ENCODE measurements at regions of chr16 and their contacts with region 1.

Region 1: DNA sequence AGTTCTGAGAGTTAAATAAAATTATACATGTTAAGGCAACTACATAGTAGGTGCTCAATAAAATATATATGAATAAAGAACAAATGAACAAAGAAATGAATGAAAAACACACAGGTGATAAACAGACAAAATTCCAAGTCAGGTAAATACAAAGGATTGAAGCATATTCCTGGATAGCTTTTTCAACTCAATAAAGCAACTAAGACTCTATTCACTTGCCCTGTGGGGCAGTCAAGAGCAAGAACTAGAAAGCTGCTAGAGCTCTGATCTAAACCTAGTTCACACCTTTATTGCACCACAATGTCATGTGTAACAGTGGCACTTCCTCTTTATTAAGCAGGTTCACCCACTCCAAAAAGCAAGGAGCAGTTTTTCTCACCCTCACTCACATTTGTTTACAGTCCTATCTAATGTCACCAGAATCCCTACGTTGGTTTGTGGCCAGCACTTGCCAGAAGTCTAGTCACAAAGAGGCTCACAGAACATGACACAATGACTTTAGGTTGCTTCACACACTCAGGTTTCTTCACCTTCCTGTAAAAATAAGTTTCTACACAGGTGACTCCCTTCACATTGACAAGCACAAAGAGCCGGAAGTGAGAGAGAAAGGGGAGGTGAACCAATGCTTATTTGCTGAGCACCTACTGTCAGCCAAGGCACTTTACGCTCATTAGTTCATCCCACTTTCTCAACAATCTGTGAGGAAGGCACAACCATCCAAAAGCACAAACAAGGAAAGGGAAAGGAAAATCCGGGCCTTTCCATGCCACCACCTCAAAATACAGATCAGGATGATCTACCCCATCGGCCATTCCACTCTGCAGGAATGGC is 70.8 kb downstream of the XPO6 start:
- DNase-seq: peak; percentile 90
- ATAC-seq: peak; percentile 77
- H3K4me3 ChIP-seq: peak overlapping the region in 4 of 5 experiments; percentile 23 to 53 (median 38)
- H3K4me3 Mint-ChIP-seq: peak overlapping the region; percentile 75
- H3K27ac ChIP-seq: peak overlapping the region; percentile 86 to 96
- H3K27ac Mint-ChIP-seq: peak overlapping the region; percentile 97
- H3K4me1 ChIP-seq: peaks cover 62 to 71% of the 10 kb centered on the region in 2 donors
- H3K4me1 Mint-ChIP-seq: peaks cover 63% of the 10 kb centered on the region
- H3K27me3 ChIP-seq: no peaks in the 10 kb centered on the region
- H3K27me3 Mint-ChIP-seq: no peaks in the 10 kb centered on the region
- CTCF ChIP-seq: peak; percentile 68

Region 2: DNA sequence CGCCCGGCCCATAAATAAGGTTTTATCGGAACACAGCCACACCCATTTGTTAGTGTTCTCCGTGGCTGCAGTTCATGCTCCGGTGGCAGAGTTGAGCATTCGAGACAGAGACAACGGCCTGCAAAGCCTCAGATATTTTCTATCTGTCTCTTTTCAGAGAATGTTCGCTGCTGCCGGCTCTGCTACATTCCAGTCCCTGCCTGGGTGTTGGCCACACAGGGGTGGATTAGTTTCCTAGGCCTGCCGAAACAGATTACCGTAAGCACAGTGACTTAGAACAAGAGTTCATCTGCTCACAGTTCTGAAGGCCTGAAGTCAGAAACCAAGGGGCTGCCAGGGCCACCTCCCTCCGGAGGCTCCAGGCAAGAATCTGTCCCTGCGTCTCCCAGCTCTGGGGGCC is 58.4 kb before region 1 on chr16:
- CTCF ChIA-PET with region 1: no interaction called
- POLR2A ChIA-PET with region 1: no interaction called
- intact Hi-C with region 1: no loop called
- DNase-seq: no peak
- ATAC-seq: no peak
- H3K4me3 ChIP-seq: no peak overlapping the region
- H3K4me3 Mint-ChIP-seq: no peak overlapping the region
- H3K27ac ChIP-seq: no peak overlapping the region
- H3K27ac Mint-ChIP-seq: no peak overlapping the region
- H3K4me1 ChIP-seq: no peaks in the 10 kb centered on the region
- H3K4me1 Mint-ChIP-seq: no peaks in the 10 kb centered on the region
- H3K27me3 ChIP-seq: no peaks in the 10 kb centered on the region
- H3K27me3 Mint-ChIP-seq: no peaks in the 10 kb centered on the region
- CTCF ChIP-seq: no peak

Region 3: GRCh38 chr16:28092711-28093410 is 48.1 kb before region 1 on chr16:
- CTCF ChIA-PET with region 1: no interaction called
- POLR2A ChIA-PET with region 1: interaction called, 10 read pairs
- intact Hi-C with region 1: no loop called
- DNase-seq: no peak
- ATAC-seq: no peak
- H3K4me3 ChIP-seq: no peak overlapping the region
- H3K4me3 Mint-ChIP-seq: no peak overlapping the region
- H3K27ac ChIP-seq: no peak overlapping the region
- H3K27ac Mint-ChIP-seq: no peak overlapping the region
- H3K4me1 ChIP-seq: no peaks in the 10 kb centered on the region
- H3K4me1 Mint-ChIP-seq: peaks cover 2% of the 10 kb centered on the region
- H3K27me3 ChIP-seq: no peaks in the 10 kb centered on the region
- H3K27me3 Mint-ChIP-seq: no peaks in the 10 kb centered on the region
- CTCF ChIP-seq: no peak

Region 4: DNA sequence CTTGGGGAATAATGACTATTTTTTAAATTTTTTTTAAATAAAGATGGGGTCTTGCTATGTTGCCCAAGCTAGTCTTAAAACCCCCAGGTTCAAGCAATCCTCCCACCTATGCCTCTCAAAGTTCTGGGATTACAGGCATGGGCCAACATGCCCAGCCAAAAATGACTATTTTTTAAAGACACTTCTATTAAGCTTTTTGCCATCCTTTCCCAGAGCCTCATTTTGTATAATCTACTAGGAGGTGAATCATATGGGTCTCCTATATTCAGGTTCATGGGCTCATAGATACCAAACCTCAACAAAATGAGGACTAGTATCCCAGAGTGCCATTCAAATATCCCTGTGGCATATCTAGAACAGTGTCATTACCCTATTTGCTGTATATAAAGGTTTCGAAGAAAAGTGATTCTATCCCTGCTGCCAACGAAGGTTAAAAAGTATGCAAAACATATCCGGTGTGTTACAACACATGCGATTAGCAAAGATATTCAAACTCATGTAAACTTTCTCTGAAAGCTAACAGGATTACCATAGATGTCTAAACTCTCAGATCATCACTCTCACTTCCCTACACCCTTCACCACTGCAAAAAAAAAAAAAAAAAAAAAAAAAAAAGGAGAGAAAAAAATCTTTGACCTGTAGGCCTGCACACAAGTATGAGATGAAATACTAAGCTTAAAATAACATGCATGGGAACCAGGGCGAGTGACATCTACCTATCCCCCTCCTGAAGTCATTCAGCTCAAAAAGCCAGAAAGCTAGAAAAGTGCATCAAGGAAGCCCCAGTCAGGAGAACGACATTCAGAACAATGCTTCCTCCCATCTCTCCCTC is 47.3 kb after region 1 on chr16:
- CTCF ChIA-PET with region 1: interaction called, 14 read pairs
- POLR2A ChIA-PET with region 1: interaction called, 5 read pairs
- intact Hi-C with region 1: loop called (anchors 1 kb)
- DNase-seq: peak; percentile 82
- ATAC-seq: peak; percentile 71
- H3K4me3 ChIP-seq: peak overlapping the region; percentile 1 to 63 (median 41)
- H3K4me3 Mint-ChIP-seq: peak overlapping the region; percentile 76
- H3K27ac ChIP-seq: peak overlapping the region; percentile 92 to 93
- H3K27ac Mint-ChIP-seq: peak overlapping the region; percentile 86
- H3K4me1 ChIP-seq: peaks cover 76 to 82% of the 10 kb centered on the region in 2 donors
- H3K4me1 Mint-ChIP-seq: peaks cover 84% of the 10 kb centered on the region
- H3K27me3 ChIP-seq: no peaks in the 10 kb centered on the region
- H3K27me3 Mint-ChIP-seq: no peaks in the 10 kb centered on the region
- CTCF ChIP-seq: no peak

Region 5: GRCh38 chr16:28211712-28212534 is 70.9 kb after region 1 on chr16 and contains the start of gene XPO6:
- CTCF ChIA-PET with region 1: interaction called, 33 read pairs
- POLR2A ChIA-PET with region 1: interaction called, 27 read pairs
- intact Hi-C with region 1: loop called (anchors 1 kb)
- DNase-seq: peak; percentile 98
- ATAC-seq: peak; percentile 93
- H3K4me3 ChIP-seq: peak within 1 kb of the TSS; percentile 71 to 92 (median 82)
- H3K4me3 Mint-ChIP-seq: peak within 1 kb of the TSS; percentile 97
- H3K27ac ChIP-seq: peak within 1 kb of the TSS; percentile 60 to 74
- H3K27ac Mint-ChIP-seq: peak within 1 kb of the TSS; percentile 97
- H3K4me1 ChIP-seq: peaks cover 29 to 36% of the 10 kb centered on the region in 2 donors
- H3K4me1 Mint-ChIP-seq: peaks cover 31% of the 10 kb centered on the region
- H3K27me3 ChIP-seq: no peaks in the 10 kb centered on the region
- H3K27me3 Mint-ChIP-seq: no peaks in the 10 kb centered on the region
- CTCF ChIP-seq: no peak
- total RNA-seq, gene XPO6: 259 and 271 TPM in 2 replicates